Panc1 (cell line): ENCODE measurements at regions of chr9 and their contacts with region 1.

Region 1: DNA sequence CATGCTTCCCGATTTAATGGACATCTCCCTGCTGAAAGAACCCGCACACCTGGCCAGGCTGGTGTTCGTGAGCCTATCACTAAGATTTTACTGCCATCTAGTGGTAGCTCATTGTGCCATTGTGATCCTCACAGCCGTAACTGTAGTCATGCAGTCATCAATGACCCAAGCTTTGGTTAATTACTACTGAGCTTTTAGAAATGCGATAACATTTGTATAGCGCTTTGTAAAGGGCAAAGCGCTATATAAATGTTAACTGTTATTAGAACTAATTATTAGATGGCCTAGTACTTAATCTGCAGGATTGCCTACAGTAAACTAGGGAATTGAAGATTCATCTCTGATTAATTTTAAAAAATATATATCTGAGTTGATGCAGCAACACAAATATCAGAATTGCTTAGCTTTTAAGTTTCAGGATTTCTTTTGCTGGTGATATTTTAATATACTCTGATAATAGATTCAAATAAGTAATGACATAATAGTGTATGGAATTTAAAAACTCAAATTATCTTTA is 90.2 kb downstream of the HACD4 start:
- DNase-seq: peak; percentile 24
- ATAC-seq: peak; percentile 84
- H3K4me3 ChIP-seq: no peak overlapping the region
- H3K27ac ChIP-seq: no peak overlapping the region
- H3K4me1 ChIP-seq: no peaks in the 10 kb centered on the region
- H3K27me3 ChIP-seq: no peaks in the 10 kb centered on the region
- CTCF ChIP-seq: peak; percentile 54

Region 2: DNA sequence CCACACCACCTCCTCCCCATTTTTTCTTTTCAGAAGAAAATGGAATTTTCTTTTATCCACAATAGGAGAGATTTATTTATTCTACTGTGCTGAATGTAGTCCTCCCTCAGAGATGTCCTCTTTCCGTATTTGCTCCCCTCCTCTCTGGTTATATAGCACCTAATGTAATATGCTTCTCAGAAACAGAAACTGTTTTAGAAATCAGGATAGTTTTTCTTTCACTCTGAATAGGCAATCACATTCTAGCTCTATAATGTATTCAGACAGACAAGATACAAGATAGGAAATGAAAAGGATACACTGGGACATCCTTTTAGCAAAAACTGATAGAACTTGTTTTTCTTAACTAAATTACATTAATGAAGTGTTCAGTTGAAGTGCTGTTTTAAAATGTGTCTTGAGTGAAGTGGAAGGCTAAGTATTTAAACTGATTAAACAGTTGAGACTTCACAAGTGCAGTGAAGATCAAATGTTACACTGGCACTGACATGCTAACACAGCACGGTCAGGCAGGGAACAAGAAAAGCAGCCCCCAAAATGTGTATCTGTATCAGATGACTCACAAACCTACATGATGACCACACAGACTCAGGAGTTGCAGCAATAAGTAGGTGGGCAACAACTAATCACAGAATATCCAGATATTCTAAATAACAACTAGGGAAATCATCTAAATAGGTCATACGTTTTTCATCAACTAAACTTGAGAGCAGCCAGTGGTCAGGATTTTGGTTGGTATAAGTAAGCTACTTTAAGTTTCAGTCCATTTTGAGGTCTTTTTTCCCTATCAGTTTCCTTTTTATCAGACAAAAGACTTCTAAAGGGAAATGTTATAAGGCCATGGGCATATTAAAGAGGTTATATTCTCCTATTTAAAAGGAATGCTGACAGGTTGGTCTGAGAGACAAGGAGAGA is 579.3 kb before region 1 on chr9:
- CTCF ChIA-PET with region 1: no interaction called
- POLR2A ChIA-PET with region 1: no interaction called
- in situ Hi-C with region 1: no loop called
- intact Hi-C with region 1: loop called (anchors 10 kb)
- DNase-seq: no peak
- ATAC-seq: no peak
- H3K4me3 ChIP-seq: no peak overlapping the region
- H3K27ac ChIP-seq: no peak overlapping the region
- H3K4me1 ChIP-seq: no peaks in the 10 kb centered on the region
- H3K27me3 ChIP-seq: no peaks in the 10 kb centered on the region
- CTCF ChIP-seq: no peak

Region 3: GRCh38 chr9:20622330-20623020 is 318.8 kb before region 1 on chr9 and contains the start of gene MLLT3:
- CTCF ChIA-PET with region 1: interaction called, 3 read pairs
- POLR2A ChIA-PET with region 1: no interaction called
- in situ Hi-C with region 1: no loop called
- intact Hi-C with region 1: loop called (anchors 2 kb)
- DNase-seq: peak; percentile 8
- ATAC-seq: peak; percentile 96
- H3K4me3 ChIP-seq: peak within 1 kb of the TSS; percentile 51 to 54
- H3K27ac ChIP-seq: no peak within 1 kb of the TSS
- H3K4me1 ChIP-seq: no peaks in the 10 kb centered on the region
- H3K27me3 ChIP-seq: peaks cover 2% of the 10 kb centered on the region
- CTCF ChIP-seq: no peak
- total RNA-seq, gene MLLT3: 0.49 TPM

Region 4: DNA sequence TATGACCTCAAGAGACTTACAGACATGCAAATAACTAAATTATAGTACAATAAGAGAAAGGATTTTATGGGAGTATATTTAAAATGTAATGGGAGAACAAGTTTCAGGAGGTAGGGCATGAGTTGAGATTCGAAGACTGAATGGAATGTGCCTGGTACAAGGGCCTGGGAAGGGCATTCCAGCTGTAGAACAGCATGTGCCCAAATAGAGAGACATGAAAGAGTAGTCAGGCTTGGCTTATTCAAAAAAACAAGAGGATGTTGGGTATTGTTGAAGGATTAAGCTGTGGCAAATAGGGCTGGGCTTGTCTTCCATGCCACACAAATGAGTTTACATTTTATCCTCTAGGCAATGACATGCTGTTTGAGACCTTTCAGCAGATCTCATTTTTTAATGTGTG is 170.3 kb before region 1 on chr9:
- CTCF ChIA-PET with region 1: no interaction called
- POLR2A ChIA-PET with region 1: no interaction called
- in situ Hi-C with region 1: no loop called
- intact Hi-C with region 1: no loop called
- DNase-seq: no peak
- ATAC-seq: no peak
- H3K4me3 ChIP-seq: no peak overlapping the region
- H3K27ac ChIP-seq: no peak overlapping the region
- H3K4me1 ChIP-seq: no peaks in the 10 kb centered on the region
- H3K27me3 ChIP-seq: no peaks in the 10 kb centered on the region
- CTCF ChIP-seq: no peak